ENCODE measurements at regions of chr4 and their contacts with region 1.

Region 1: DNA sequence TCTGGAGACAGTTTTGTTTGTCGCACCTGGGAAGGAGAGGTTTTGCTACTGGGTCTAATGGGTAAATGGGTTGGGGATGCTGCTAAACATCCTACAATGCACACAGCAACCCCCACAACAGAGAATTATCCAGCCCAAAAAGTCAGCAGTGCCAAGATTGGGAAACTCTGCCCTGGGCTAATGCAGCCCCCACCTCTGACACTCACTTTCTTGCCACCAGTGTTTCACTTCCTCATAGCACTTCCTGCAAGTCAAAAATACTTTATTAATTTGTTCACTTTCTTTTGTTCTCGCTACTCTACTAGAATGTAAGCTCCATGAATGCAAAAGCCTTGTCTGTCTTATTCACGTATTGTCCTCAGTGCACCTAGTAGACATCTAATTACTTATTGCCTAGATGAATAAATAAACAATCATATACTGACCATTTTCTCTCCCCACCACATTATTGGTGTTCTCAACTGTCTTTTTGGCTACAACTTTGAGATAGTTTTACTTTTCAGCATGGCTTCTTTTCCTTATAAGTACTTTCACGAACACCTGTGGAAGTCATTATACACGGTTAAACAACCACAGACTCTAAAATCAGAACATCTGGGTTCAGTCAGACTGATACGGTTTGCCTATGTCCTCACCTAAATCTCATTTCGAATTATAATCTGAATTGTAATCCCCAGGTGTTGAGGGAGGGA is 82.0 kb upstream of the PITX2 start:
- DNase-seq: no peak
- H3K4me3 ChIP-seq: no peak overlapping the region
- H3K27ac ChIP-seq: no peak overlapping the region
- H3K4me1 ChIP-seq: no peaks in the 10 kb centered on the region
- H3K27me3 ChIP-seq: no peaks in the 10 kb centered on the region
- CTCF ChIP-seq: no peak
- EP300 ChIP-seq: no peak
- POLR2A ChIP-seq: no peak

Region 2: DNA sequence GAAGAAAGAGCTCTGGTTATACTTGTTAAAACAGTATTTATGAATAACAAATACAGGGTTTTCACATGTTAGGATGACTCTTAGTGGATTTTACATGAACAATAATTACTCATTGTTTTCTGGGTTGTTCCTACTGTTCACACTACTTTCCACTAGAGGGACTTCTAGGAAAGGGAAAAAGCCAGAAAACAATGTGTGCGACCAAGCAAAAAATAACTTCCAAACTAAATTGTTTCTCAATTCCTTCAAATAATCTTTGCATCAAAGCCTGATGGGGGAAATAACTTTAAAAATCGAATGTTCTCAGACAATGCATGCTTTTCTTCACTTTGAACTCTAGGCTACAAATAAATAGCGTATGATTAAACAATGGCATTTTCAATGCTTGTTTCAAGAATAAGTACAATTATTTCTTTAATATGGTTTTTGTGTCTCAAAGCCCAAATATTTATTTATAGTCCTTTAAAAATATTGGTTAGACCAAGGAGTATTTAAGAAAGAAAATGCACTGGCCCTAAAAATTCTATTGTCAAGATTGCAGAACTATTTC is 1870.0 kb before region 1 on chr4:
- in situ Hi-C with region 1: no loop called
- intact Hi-C with region 1: no loop called
- DNase-seq: no peak
- H3K4me3 ChIP-seq: no peak overlapping the region
- H3K27ac ChIP-seq: no peak overlapping the region
- H3K4me1 ChIP-seq: peaks cover 4 to 14% (median 9%) of the 10 kb centered on the region in 4 donors
- H3K27me3 ChIP-seq: no peaks in the 10 kb centered on the region
- CTCF ChIP-seq: peak; percentile 38 to 57 (median 48)
- EP300 ChIP-seq: no peak
- POLR2A ChIP-seq: no peak

Region 3: DNA sequence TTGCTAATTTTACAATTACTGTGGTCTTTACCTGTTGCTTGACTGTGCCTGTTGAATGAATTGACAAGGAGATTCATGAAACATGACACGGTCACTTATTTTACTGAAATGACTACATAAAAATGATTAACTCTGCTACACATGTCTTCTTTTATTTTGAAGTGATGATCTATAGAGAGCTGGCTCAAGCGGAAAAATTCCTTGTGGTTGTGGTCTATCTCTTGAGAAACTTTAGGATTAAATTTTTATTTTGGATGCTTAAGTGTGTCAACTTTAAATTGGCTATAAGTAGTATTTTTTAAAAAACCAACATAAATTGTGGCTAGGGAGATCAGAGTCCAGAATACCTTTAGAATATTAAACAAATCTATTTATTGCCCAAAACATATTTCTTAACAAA is 49.8 kb after region 1 on chr4:
- in situ Hi-C with region 1: no loop called
- intact Hi-C with region 1: no loop called
- DNase-seq: no peak
- H3K4me3 ChIP-seq: no peak overlapping the region
- H3K27ac ChIP-seq: no peak overlapping the region
- H3K4me1 ChIP-seq: no peaks in the 10 kb centered on the region
- H3K27me3 ChIP-seq: no peaks in the 10 kb centered on the region
- CTCF ChIP-seq: no peak
- EP300 ChIP-seq: no peak
- POLR2A ChIP-seq: no peak

Region 4: DNA sequence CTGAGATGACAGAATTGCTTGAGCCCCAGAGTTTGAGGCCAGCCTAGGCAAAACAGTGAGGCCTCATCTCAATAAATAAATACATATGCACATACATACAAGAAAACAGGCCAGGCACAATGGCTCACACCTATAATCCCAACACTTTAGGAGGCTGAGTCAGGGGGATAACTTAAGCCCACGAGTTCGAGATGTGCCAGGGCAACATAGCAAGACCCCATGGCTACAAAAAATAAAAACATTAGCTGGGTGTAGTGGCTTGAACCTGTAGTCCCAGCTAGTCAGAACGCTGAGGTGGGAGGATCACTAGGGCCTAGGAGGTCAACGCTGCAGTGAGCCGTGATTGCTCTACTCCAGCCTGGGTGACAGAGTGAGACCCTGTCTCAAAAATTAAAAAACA is 1862.6 kb after region 1 on chr4:
- in situ Hi-C with region 1: no loop called
- intact Hi-C with region 1: loop called (anchors 5 kb)
- DNase-seq: no peak
- H3K4me3 ChIP-seq: no peak overlapping the region
- H3K27ac ChIP-seq: no peak overlapping the region
- H3K4me1 ChIP-seq: no peaks in the 10 kb centered on the region
- H3K27me3 ChIP-seq: no peaks in the 10 kb centered on the region
- CTCF ChIP-seq: no peak
- EP300 ChIP-seq: no peak
- POLR2A ChIP-seq: no peak